ENCODE measurements at regions of chr6 and their contacts with region 1.

Region 1: DNA sequence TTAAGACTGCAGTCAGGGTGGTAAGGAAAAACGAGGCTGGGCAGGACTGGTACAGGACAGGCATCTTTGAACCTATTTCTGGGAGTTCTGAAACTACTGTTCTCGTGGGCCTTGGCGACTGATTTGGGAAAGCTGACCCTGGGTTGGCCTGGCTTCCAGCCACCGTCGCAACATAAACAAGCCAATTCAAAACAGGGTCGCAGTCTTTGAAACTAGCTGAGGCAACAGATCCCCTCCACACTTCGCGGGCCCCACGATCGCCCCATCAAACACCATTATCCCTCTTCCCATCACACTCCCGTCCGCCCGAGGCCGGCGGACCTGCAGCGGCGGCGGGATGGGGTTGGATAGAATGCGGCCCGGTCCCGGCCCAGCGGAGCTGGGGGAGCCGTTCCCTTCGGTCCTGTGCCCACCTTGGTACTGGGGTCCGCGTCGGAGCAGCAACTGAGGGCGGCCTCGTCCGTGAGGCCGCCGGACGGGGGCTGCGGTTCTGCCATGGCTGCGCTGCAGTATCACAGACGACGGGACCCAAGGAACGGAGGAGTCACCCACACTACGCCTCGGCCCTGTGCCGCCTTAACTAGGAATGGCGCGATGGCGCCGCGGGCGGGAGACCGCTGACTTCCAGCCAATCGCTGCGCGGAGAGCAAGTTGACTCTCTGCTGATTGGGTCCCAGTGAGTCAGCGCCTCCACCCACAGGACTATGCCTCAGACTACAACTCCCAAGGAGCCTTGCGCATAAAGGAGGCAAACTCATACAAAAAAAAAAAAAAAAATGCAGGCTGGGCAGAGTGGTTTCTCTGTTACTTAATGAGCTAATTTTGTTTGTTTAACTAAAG is at the start of gene GLO1:
- DNase-seq: peak; percentile 95
- H3K4me3 Mint-ChIP-seq: peak within 1 kb of the TSS; percentile 91
- H3K27ac Mint-ChIP-seq: peak within 1 kb of the TSS; percentile 85
- H3K4me1 Mint-ChIP-seq: peaks cover 45% of the 10 kb centered on the region
- H3K27me3 Mint-ChIP-seq: peaks cover 7% of the 10 kb centered on the region
- total RNA-seq, gene GLO1: 109 and 110 TPM in 2 replicates

Region 2: GRCh38 chr6:38522322-38522721 is 180.5 kb before region 1 on chr6:
- intact Hi-C with region 1: no loop called
- DNase-seq: no peak
- H3K4me3 Mint-ChIP-seq: no peak overlapping the region
- H3K27ac Mint-ChIP-seq: no peak overlapping the region
- H3K4me1 Mint-ChIP-seq: peaks cover 11% of the 10 kb centered on the region
- H3K27me3 Mint-ChIP-seq: no peaks in the 10 kb centered on the region

Region 3: DNA sequence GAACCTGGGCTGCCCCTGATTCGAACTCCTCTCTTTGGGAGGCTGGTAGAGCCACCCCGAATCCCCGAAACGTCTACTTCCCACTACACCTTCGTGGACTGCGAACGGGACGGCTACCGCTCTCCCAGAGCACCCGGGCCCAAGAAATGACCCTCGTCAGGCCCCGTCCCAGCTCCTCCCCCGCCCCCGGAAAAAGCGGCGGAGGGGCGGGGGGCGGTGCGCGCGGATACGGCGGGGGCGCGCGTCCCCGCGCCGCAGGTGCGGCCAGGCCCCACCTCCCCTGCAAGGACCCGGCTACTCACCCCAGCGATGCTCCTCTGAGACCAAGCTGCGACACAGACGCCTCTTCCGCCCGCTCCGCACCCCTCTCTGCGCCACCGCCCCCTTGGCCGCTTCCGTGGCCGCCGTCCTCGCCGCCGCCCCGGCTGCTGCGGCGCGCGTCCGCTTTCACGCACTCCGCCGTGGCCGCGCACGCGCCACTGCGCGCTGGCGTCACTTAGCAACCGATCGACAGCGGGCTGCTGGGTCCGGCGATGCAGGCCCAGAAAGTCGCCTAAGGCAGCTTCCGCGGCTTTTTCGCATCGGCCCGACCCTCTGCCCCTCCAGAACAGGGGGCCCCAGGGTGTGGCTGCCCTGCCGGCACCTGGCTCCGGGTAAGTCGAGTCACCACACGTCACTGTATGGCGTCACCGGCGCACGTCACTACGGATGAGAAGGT is 63.1 kb before region 1 on chr6 and contains the start of gene BTBD9:
- intact Hi-C with region 1: loop called (anchors 1 kb)
- DNase-seq: peak; percentile 80
- H3K4me3 Mint-ChIP-seq: peak within 1 kb of the TSS; percentile 92
- H3K27ac Mint-ChIP-seq: peak within 1 kb of the TSS; percentile 91
- H3K4me1 Mint-ChIP-seq: peaks cover 47% of the 10 kb centered on the region
- H3K27me3 Mint-ChIP-seq: no peaks in the 10 kb centered on the region
- total RNA-seq, gene BTBD9: 14.5 and 16.4 TPM in 2 replicates

Region 4: GRCh38 chr6:38713812-38714211 is 11.0 kb after region 1 on chr6:
- intact Hi-C with region 1: loop called (anchors 1 kb)
- DNase-seq: peak; percentile 75
- H3K4me3 Mint-ChIP-seq: peak overlapping the region; percentile 65
- H3K27ac Mint-ChIP-seq: peak overlapping the region; percentile 76
- H3K4me1 Mint-ChIP-seq: peaks cover 42% of the 10 kb centered on the region
- H3K27me3 Mint-ChIP-seq: peaks cover 5% of the 10 kb centered on the region

Region 5: GRCh38 chr6:38725414-38726183 is 22.8 kb after region 1 on chr6:
- intact Hi-C with region 1: loop called (anchors 1 kb)
- DNase-seq: no peak
- H3K4me3 Mint-ChIP-seq: peak overlapping the region; percentile 34
- H3K27ac Mint-ChIP-seq: peak overlapping the region; percentile 50
- H3K4me1 Mint-ChIP-seq: peaks cover 24% of the 10 kb centered on the region
- H3K27me3 Mint-ChIP-seq: peaks cover 7% of the 10 kb centered on the region

Region 6: DNA sequence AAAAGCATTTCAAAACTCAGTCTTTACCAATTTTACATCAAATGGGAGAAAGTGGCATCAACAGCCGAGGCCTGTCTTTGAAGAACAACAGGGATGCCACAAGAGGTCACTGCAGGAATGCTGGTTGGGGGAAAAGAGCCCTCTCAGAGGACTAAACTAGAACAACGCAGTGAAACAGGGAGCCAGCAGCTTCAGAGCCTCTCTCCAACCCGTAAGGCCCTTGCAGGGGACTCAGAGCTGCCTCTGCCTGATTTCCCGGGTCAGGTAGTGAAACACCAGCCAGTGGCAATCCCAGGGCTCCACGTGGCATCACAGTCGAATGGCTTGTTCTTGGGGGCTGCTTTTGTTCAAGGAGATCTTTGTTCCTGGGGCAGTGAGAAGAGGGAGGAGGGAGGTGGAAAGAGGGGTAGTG is 674.8 kb after region 1 on chr6:
- intact Hi-C with region 1: no loop called
- DNase-seq: no peak
- H3K4me3 Mint-ChIP-seq: no peak overlapping the region
- H3K27ac Mint-ChIP-seq: no peak overlapping the region
- H3K4me1 Mint-ChIP-seq: no peaks in the 10 kb centered on the region
- H3K27me3 Mint-ChIP-seq: peaks cover 4% of the 10 kb centered on the region